WTC11 (cell line): ENCODE measurements at regions of chr7 and their contacts with region 1.

Region 1: DNA sequence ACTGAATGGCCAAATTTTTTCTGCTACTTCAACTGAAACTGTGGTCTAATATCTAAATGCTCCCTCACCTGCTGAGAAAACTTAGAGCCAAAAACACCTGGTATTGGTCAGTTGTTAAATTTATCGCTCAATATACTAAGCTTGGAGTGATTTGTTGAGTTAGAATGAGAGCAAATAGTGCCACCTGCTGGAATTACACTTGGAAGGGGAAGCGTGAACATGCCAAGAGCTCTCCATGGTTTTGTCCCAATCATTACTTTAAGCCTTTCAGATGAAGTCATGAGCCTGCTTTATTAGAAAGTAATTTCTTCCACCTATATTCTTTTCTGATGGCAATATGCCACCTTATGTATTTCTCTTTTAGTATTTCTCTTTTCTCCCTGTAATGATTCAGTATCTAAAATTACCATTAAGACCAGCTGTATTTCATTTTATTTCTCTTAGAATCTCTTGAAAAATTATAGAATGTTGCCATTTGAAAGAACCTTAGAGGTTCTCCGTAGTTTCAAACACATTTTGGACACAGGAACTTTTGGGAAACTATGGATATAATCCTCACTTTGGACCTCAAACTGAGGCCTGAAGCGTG is 447.8 kb upstream of the C7orf33 start:
- DNase-seq: no peak
- ATAC-seq: peak; percentile 73
- H3K4me3 Mint-ChIP-seq: no peak overlapping the region
- H3K27ac Mint-ChIP-seq: no peak overlapping the region
- H3K4me1 Mint-ChIP-seq: peaks cover 6% of the 10 kb centered on the region
- H3K27me3 Mint-ChIP-seq: no peaks in the 10 kb centered on the region; the same call in 1 of the 2 replicates
- CTCF ChIP-seq: peak; percentile 31; the same call in 1 of the 2 replicates

Region 2: DNA sequence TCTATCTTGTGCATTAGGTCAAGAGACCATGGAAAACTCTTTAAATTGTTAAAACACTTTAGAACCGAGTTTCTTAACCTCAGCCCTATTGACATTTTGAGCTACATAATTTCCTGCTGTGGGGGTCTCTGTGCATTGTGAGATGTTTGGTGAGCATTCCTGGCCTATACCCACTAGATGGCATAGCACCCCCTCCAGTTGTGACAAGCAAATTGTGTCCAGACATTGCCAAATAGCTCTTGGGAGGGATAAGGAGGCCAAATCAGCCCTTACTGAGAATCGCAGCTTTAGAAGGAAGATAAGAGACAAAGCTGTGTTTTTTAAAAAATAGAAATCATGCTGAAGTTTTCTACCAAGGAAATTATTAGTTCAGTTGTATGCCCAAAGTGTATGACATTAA is 710.7 kb before region 1 on chr7:
- CTCF ChIA-PET with region 1: interaction called, 27 read pairs
- POLR2A ChIA-PET with region 1: no interaction called
- DNase-seq: peak; percentile 30
- ATAC-seq: peak; percentile 87
- H3K4me3 Mint-ChIP-seq: no peak overlapping the region
- H3K27ac Mint-ChIP-seq: no peak overlapping the region
- H3K4me1 Mint-ChIP-seq: no peaks in the 10 kb centered on the region
- H3K27me3 Mint-ChIP-seq: peaks cover 80% of the 10 kb centered on the region
- CTCF ChIP-seq: no peak

Region 3: DNA sequence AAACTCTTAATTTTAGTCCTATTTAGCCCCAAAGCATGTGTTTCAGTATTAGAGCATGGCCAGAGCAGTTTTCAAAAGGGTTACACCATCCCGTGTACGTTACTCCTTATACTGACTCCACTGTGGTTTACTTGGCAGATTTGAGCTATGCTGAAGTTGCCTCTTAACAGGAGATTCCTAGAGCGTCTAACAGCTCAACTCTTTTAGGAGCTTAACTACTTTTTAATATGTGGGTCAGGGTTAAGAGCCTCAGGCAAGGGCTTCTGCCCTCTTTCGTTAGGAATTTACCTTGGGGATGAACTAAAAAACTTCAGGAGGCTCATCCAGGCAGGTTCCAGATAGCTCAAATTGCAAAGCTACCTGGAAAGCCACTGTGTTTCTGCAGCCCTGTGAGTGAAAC is 227.0 kb before region 1 on chr7:
- CTCF ChIA-PET with region 1: interaction called, 11 read pairs
- POLR2A ChIA-PET with region 1: no interaction called
- DNase-seq: no peak
- ATAC-seq: peak; percentile 89
- H3K4me3 Mint-ChIP-seq: no peak overlapping the region
- H3K27ac Mint-ChIP-seq: peak overlapping the region; percentile 60
- H3K4me1 Mint-ChIP-seq: peaks cover 23% of the 10 kb centered on the region
- H3K27me3 Mint-ChIP-seq: no peaks in the 10 kb centered on the region
- CTCF ChIP-seq: no peak

Region 4: DNA sequence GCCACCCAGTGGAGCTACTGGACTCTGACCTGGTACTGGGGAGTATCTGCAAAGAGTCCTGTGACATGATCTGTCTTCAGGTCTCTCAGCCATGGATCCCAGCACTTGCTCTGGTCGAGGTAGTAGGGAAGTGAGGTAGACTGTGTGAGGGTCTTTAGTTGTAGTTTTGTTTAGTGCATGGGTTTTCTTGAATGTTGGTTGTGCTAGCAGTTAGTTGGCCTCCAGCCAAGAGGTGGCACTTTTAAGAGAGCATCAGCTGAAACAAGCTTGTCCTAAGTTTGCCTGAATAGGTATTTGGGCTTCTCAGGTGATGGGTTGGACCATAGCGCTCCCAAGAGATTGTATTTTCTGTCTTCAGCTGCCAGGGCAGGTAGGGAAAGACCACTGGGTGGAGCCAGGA is 75.4 kb before region 1 on chr7:
- CTCF ChIA-PET with region 1: interaction called, 10 read pairs
- POLR2A ChIA-PET with region 1: no interaction called
- DNase-seq: no peak
- ATAC-seq: peak; percentile 56; the same call in 1 of the 2 replicates
- H3K4me3 Mint-ChIP-seq: no peak overlapping the region
- H3K27ac Mint-ChIP-seq: no peak overlapping the region
- H3K4me1 Mint-ChIP-seq: no peaks in the 10 kb centered on the region; the same call in 1 of the 2 replicates
- H3K27me3 Mint-ChIP-seq: peaks cover 6% of the 10 kb centered on the region
- CTCF ChIP-seq: no peak

Region 5: DNA sequence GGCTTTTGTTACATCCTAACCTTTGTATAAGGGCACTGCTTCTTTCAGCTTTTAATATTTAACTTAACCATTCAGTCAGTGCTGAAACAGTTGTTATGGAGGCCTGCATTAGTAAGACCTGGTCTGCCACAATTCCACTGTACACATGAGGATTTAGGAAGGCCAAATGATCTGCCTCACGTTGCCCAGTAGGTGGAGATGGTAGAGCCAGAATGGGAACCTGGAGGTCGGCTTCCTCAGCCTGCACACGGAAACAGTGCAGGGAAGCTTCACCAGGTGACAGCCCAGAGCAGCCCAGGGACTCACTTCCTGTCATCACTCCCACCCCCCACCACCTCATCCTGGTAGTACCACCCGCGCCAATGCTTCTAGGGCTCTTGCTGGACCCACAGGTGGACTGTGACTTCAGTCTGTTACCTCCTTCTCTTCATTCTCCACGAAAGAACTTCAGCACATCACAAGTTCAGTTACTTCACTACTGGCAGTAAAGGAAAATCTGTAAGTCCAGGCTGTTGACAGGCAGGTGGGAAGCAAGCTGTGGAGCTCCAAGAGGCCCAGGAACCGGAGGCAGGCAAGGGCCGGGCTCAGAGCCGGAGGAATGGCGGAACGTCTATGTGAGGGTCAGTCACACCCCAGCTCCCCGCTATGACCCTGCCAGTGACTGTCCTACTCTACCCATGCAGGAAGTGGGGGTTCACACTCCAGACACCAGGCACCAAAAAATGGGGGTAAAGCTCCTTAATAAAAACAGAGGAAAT is 32.5 kb before region 1 on chr7:
- CTCF ChIA-PET with region 1: interaction called, 31 read pairs
- POLR2A ChIA-PET with region 1: interaction called, 3 read pairs
- DNase-seq: peak; percentile 21
- ATAC-seq: peak; percentile 70
- H3K4me3 Mint-ChIP-seq: no peak overlapping the region
- H3K27ac Mint-ChIP-seq: no peak overlapping the region
- H3K4me1 Mint-ChIP-seq: peaks cover 28% of the 10 kb centered on the region
- H3K27me3 Mint-ChIP-seq: no peaks in the 10 kb centered on the region; the same call in 1 of the 2 replicates
- CTCF ChIP-seq: 0 out of 2 replicates have a peak, but pooled peaks have one; percentile 23

Region 6: GRCh38 chr7:148153616-148154284 is 11.0 kb after region 1 on chr7:
- CTCF ChIA-PET with region 1: interaction called, 21 read pairs
- POLR2A ChIA-PET with region 1: no interaction called
- DNase-seq: no peak
- ATAC-seq: no peak
- H3K4me3 Mint-ChIP-seq: no peak overlapping the region
- H3K27ac Mint-ChIP-seq: no peak overlapping the region
- H3K4me1 Mint-ChIP-seq: 0 out of 2 replicates have a peak, but pooled peaks cover 3% of the 10 kb centered on the region
- H3K27me3 Mint-ChIP-seq: no peaks in the 10 kb centered on the region
- CTCF ChIP-seq: no peak

Region 7: DNA sequence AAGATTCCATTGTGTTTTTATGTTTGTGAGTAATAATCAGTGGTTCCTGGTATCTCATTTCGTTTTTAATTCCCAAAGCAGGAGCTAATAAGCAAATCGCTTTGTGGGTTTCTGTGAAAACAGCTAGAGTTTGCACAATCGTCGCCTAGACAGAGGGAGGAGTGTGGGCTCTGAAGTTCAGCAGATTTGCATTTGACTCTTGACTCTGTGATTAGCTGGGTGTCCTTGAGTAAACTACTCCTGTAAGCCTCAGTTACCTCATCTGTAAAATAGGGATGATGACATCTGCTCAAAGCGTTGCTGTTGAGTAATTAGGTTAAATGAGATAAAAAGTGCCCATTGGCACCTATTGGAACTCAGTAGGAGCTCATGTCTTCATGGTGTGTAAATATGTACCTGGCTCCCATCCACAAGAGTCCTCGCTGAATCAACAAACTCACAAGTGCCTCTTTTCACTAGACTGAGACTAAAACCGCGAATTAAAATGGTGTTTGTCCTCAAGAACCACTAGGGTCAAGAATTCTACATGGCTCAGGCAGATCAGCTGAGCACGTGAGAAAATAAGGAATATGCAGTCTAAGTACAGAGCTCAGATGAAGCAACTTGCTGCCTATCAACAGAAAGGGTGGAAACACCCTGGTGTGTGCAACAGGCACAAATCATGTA is 62.0 kb after region 1 on chr7:
- CTCF ChIA-PET with region 1: no interaction called
- POLR2A ChIA-PET with region 1: no interaction called
- DNase-seq: no peak
- ATAC-seq: peak; percentile 58
- H3K4me3 Mint-ChIP-seq: no peak overlapping the region
- H3K27ac Mint-ChIP-seq: no peak overlapping the region
- H3K4me1 Mint-ChIP-seq: peaks cover 10% of the 10 kb centered on the region
- H3K27me3 Mint-ChIP-seq: no peaks in the 10 kb centered on the region; the same call in 1 of the 2 replicates
- CTCF ChIP-seq: no peak

Region 8: DNA sequence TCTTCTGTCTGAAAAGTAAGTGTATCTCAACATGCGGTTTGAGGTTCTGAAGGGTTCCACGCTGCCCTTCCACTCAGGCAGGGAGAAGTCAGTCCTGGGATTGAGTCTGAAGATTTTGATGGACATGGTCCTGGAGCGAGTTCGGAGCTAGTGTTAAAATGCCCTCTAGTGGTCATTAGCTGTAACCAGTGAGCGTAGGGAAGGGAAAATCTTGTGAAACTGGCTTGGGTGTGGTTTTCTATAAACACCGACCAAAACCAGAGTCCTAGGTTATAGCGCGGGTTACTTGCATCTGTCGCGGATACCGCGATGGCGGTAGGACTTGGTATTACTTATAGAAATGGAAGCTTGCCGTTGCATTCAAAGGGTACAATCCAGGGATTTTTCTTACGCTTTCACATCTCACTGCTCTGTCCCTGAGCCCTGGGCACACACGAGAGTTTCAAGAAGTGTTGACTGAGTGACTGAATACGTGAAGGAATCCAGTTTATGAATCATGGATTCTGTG is 99.6 kb after region 1 on chr7:
- CTCF ChIA-PET with region 1: interaction called, 16 read pairs
- POLR2A ChIA-PET with region 1: no interaction called
- DNase-seq: peak; percentile 23
- ATAC-seq: peak; percentile 95
- H3K4me3 Mint-ChIP-seq: peak overlapping the region; percentile 14; the same call in 1 of the 2 replicates
- H3K27ac Mint-ChIP-seq: no peak overlapping the region
- H3K4me1 Mint-ChIP-seq: peaks cover 12% of the 10 kb centered on the region
- H3K27me3 Mint-ChIP-seq: peaks cover 9% of the 10 kb centered on the region
- CTCF ChIP-seq: peak; percentile 78